HCT116 (cell line): ENCODE measurements at regions of chr14 and their contacts with region 1.

Region 1: GRCh38 chr14:52272375-52272774 is 4.9 kb downstream of the PTGDR start:
- DNase-seq: peak; percentile 29
- ATAC-seq: peak; percentile 89
- H3K4me3 ChIP-seq: no peak overlapping the region
- H3K27ac ChIP-seq: no peak overlapping the region
- H3K4me1 ChIP-seq: no peaks in the 10 kb centered on the region
- H3K27me3 ChIP-seq: no peaks in the 10 kb centered on the region
- CTCF ChIP-seq: peak; percentile 46 to 79 (median 61); a peak in 5 of 6 replicates
- POLR2A ChIP-seq: no peak
- RAD21 ChIP-seq: peak; percentile 68

Region 2: GRCh38 chr14:51996148-51996746 is 276.1 kb before region 1 on chr14:
- CTCF ChIA-PET with region 1: no interaction called
- POLR2A ChIA-PET with region 1: no interaction called
- RAD21 ChIA-PET with region 1: no interaction called
- intact Hi-C with region 1: loop called (anchors 5 kb)
- DNase-seq: no peak
- ATAC-seq: no peak
- H3K4me3 ChIP-seq: no peak overlapping the region
- H3K27ac ChIP-seq: no peak overlapping the region
- H3K4me1 ChIP-seq: no peaks in the 10 kb centered on the region
- H3K27me3 ChIP-seq: no peaks in the 10 kb centered on the region
- CTCF ChIP-seq: peak in 2 of 3 experiments; percentile 27 to 61; a peak in 3 of 6 replicates
- POLR2A ChIP-seq: no peak
- RAD21 ChIP-seq: peak; percentile 37; the same call in 1 of the 2 replicates

Region 3: GRCh38 chr14:52043690-52044089 is 228.7 kb before region 1 on chr14:
- CTCF ChIA-PET with region 1: interaction called, 7 read pairs
- POLR2A ChIA-PET with region 1: no interaction called
- RAD21 ChIA-PET with region 1: no interaction called
- intact Hi-C with region 1: loop called (anchors 1 kb)
- DNase-seq: peak; percentile 50
- ATAC-seq: peak; percentile 100
- H3K4me3 ChIP-seq: no peak overlapping the region
- H3K27ac ChIP-seq: no peak overlapping the region
- H3K4me1 ChIP-seq: peaks cover 0 to 13% of the 10 kb centered on the region in 2 experiments; a peak in 1 of 4 replicates
- H3K27me3 ChIP-seq: no peaks in the 10 kb centered on the region
- CTCF ChIP-seq: peak; percentile 58 to 82 (median 73); a peak in 5 of 6 replicates
- POLR2A ChIP-seq: no peak
- RAD21 ChIP-seq: peak; percentile 57

Region 4: DNA sequence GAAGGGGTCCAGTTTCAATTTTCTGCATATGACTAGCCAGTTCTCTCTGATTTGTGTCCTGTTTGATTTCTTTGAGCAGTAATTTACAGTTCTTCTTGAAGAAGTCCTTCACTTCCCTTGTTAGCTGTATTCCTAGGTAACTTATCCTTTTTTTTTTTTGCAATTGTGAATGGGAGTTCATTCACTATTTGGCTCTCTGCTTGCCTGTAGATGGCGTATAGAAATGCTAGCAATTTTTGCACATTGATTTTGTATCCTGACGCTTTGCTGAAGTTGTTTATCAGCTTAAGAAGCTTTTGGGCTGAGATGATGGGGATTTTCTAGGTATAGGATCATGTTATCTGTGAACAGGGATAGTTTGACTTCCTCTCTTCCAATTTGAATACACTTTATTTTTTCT is 125.9 kb before region 1 on chr14:
- CTCF ChIA-PET with region 1: interaction called, 5 read pairs
- POLR2A ChIA-PET with region 1: no interaction called
- RAD21 ChIA-PET with region 1: no interaction called
- intact Hi-C with region 1: loop called (anchors 10 kb)
- DNase-seq: no peak
- ATAC-seq: no peak
- H3K4me3 ChIP-seq: no peak overlapping the region
- H3K27ac ChIP-seq: no peak overlapping the region
- H3K4me1 ChIP-seq: no peaks in the 10 kb centered on the region
- H3K27me3 ChIP-seq: peaks cover 8% of the 10 kb centered on the region; the same call in 1 of the 2 replicates
- CTCF ChIP-seq: no peak; a peak in 1 of 6 replicates
- POLR2A ChIP-seq: no peak
- RAD21 ChIP-seq: no peak

Region 5: GRCh38 chr14:52485350-52485960 is 213.1 kb after region 1 on chr14:
- CTCF ChIA-PET with region 1: no interaction called
- POLR2A ChIA-PET with region 1: no interaction called
- RAD21 ChIA-PET with region 1: no interaction called
- intact Hi-C with region 1: no loop called
- DNase-seq: no peak
- ATAC-seq: no peak
- H3K4me3 ChIP-seq: no peak overlapping the region
- H3K27ac ChIP-seq: no peak overlapping the region
- H3K4me1 ChIP-seq: no peaks in the 10 kb centered on the region
- H3K27me3 ChIP-seq: no peaks in the 10 kb centered on the region
- CTCF ChIP-seq: no peak
- POLR2A ChIP-seq: no peak
- RAD21 ChIP-seq: no peak